ENCODE measurements at regions of chr15 and their contacts with region 1.

Region 1: GRCh38 chr15:44711356-44712107 is at the start of gene B2M:
- DNase-seq: peak; percentile 87
- H3K4me3 Mint-ChIP-seq: peak within 1 kb of the TSS; percentile 97
- H3K27ac Mint-ChIP-seq: peak within 1 kb of the TSS; percentile 93
- H3K4me1 Mint-ChIP-seq: no peaks in the 10 kb centered on the region
- H3K27me3 Mint-ChIP-seq: no peaks in the 10 kb centered on the region
- CTCF ChIP-seq: no peak
- total RNA-seq, gene B2M: 1,002 and 1,731 TPM in 2 replicates

Region 2: DNA sequence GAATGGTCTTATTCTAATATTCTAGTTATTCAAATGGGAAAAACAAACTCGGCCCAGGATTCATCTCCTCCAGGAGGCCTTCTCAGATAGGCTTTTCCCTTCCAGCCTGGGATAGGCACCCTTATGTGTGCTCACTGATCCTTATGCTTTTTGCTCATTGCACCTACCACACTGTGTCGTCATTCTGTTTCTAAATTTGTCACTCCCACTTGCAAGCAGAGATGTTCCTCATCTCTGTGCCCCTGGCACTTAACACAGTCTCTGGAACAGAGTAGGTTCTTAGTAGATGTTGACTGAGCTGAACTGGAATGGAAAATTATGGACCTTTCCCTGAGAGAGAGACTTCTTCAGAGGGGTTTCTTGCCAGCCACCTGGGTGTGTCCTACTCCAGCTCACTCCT is 29.3 kb before region 1 on chr15:
- CTCF ChIA-PET with region 1: interaction called, 3 read pairs
- intact Hi-C with region 1: loop called (anchors 1 kb)
- DNase-seq: no peak
- H3K4me3 Mint-ChIP-seq: no peak overlapping the region
- H3K27ac Mint-ChIP-seq: no peak overlapping the region
- H3K4me1 Mint-ChIP-seq: peaks cover 12% of the 10 kb centered on the region
- H3K27me3 Mint-ChIP-seq: no peaks in the 10 kb centered on the region
- CTCF ChIP-seq: no peak

Region 3: DNA sequence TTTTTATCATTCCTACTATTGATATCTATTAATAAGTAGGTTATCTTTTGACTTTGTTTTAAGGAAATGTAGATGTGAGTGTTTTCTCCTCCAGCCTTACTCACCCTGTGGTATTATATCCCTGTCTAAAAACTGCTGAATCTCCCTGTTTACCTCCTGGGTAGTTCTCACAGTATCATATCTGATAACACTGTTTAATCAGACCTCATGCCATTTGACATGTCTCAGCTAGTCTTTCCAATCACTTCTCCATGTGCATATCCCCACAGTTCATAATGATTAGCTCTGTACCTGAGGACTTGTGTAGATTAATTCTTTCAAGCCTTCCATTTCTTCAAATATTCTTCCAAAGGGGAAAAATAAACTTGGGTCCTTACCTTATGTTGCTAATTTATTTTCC is 371.7 kb after region 1 on chr15:
- CTCF ChIA-PET with region 1: no interaction called
- intact Hi-C with region 1: no loop called
- DNase-seq: no peak
- H3K4me3 Mint-ChIP-seq: no peak overlapping the region
- H3K27ac Mint-ChIP-seq: no peak overlapping the region
- H3K4me1 Mint-ChIP-seq: no peaks in the 10 kb centered on the region
- H3K27me3 Mint-ChIP-seq: peaks cover 31% of the 10 kb centered on the region
- CTCF ChIP-seq: no peak